ENCODE measurements at regions of chr3 and their contacts with region 1.

Region 1: DNA sequence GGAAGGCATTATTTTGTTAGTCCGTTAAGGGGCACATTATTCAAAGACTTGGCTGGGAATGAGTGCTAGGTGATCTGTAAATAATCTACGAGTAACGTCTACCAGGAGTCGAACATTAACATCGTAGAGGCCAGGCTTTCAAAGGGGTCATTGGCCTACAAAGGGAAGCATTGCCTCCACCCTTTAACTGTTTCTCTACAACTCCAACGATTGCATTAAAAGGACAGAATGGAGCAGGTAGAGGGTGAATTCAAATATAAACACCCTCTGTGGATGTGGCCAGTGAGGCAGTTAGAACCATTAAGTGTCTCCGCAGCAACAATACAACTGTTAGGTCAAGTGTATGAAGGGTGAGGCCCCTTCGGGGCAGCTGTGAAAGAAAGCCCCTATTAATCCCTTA is 126.0 kb upstream of the LMOD3 start:
- DNase-seq: no peak
- H3K4me3 ChIP-seq: peak overlapping the region in 41 of 59 donors; percentile 15 to 67 (median 51)
- H3K27ac ChIP-seq: peak overlapping the region in 45 of 59 donors; percentile 1 to 91 (median 74)
- H3K27me3 ChIP-seq: no peaks in the 10 kb centered on the region
- CTCF ChIP-seq: no peak

Region 2: GRCh38 chr3:69209413-69209812 is 39.0 kb before region 1 on chr3:
- intact Hi-C with region 1: loop called in 1 of 2 experiments (anchors 5 kb)
- DNase-seq: no peak
- H3K4me3 ChIP-seq: no peak overlapping the region
- H3K27ac ChIP-seq: peak overlapping the region in 3 of 59 donors; percentile 13 to 22 (median 20)
- H3K27me3 ChIP-seq: no peaks in the 10 kb centered on the region
- CTCF ChIP-seq: no peak

Measured in dorsolateral prefrontal cortex (tissue), 120 donors.